Right ventricle myocardium inferior (tissue), 1 donor: ENCODE measurements at regions of chr1 and their contacts with region 1.

Region 1: GRCh38 chr1:162136760-162137159 is 67.3 kb downstream of the NOS1AP start:
- DNase-seq: no peak
- ATAC-seq: no peak

Region 2: DNA sequence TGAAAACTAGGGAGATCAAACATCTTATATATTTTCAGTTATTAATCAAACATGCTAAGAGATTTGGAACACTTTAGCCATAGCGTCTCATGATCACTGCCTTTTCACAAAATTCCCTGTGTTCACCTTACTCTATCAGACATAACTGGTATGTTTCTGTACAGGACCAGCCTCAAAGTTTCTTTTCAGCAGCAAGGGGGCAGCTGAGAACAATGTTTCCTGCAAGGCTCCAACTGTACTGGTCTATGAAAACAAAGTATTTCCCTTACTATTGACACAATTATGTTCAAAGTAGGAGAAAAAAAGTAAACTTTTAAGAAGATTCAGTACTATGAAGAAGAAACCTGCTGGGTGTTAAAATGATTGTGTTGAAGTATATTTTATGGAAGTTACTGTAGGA is 272.2 kb before region 1 on chr1:
- intact Hi-C with region 1: no loop called
- DNase-seq: no peak
- ATAC-seq: no peak

Region 3: DNA sequence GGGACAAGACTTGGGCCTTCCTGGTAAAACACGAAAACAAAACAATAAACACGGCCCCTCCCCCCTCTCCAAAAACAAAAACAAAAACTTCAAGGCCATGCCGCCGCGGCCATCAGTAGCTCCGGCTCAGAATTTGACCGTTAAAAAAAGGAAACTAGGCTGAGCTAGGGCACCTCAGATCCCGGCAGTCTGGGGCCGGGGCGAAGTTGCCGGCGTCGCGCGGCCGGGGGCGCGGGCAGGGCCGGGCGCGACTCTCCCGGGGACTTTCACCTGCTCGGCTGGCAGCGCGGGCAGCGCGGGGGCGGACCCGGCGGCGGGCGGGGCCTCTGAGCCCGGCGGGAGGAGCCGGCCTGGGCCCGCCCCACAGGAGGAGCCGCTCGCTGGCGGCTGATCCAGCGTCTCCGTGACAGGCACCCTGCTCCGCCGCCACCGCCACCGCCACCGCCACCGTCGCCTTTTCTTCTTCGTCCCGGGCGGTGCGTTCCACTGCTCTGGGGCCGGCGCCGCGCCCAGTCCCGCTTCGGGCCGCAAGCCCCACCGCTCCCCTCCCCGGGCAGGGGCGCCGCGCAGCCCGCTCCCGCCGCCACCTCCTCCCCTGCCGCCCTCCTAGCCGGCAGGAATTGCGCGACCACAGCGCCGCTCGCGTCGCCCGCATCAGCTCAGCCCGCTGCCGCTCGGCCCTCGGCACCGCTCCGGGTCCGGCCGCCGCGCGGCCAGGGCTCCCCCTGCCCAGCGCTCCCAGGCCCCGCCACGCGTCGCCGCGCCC is 67.2 kb before region 1 on chr1 and contains the start of gene NOS1AP:
- intact Hi-C with region 1: loop called (anchors 5 kb)
- DNase-seq: peak; percentile 92
- ATAC-seq: peak; percentile 97
- total RNA-seq, gene NOS1AP: 3.5 TPM

Region 4: GRCh38 chr1:162187687-162188276 is 51.0 kb after region 1 on chr1:
- intact Hi-C with region 1: no loop called
- DNase-seq: no peak
- ATAC-seq: no peak

Region 5: DNA sequence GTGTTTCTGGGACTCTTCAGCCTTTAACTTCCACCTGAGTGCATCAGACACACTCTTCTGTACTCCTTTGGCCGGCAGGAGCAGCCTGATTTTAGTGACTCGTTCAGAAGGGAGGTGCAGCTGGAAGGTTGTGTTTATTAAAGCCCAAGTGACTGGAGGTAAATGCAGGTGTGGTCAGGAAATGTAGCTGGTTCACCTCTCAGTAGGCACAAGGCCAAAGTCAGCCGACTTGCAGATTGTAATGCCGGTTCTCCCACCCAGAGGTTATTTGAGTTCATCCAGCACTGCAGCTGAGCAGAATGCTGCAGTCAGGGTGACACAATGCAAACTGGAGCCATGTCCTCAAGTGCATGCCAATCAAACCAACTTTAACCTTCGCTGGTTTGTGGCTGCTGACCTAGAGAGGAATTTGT is 148.4 kb after region 1 on chr1:
- intact Hi-C with region 1: loop called (anchors 10 kb)
- DNase-seq: no peak
- ATAC-seq: peak; percentile 89